Activated CD4-positive, alpha-beta T cell treated with anti-CD3 and anti-CD28 coated beads for 36 hours (primary cell): ENCODE measurements at regions of chr1 and their contacts with region 1.

Region 1: GRCh38 chr1:66331657-66332547 is 202.1 kb upstream of the SGIP1 start:
- DNase-seq: peak; percentile 75
- ATAC-seq: peak; percentile 40
- H3K4me3 Mint-ChIP-seq: peak overlapping the region; percentile 91
- H3K27ac Mint-ChIP-seq: peak overlapping the region; percentile 98
- H3K4me1 Mint-ChIP-seq: peaks cover 44% of the 10 kb centered on the region
- H3K27me3 Mint-ChIP-seq: no peaks in the 10 kb centered on the region

Region 2: GRCh38 chr1:66231217-66231616 is 100.7 kb before region 1 on chr1:
- CTCF ChIA-PET with region 1: no interaction called
- POLR2A ChIA-PET with region 1: no interaction called
- intact Hi-C with region 1: no loop called
- DNase-seq: no peak
- ATAC-seq: peak; percentile 97
- H3K4me3 Mint-ChIP-seq: no peak overlapping the region
- H3K27ac Mint-ChIP-seq: no peak overlapping the region
- H3K4me1 Mint-ChIP-seq: peaks cover 15% of the 10 kb centered on the region
- H3K27me3 Mint-ChIP-seq: peaks cover 6% of the 10 kb centered on the region

Region 3: DNA sequence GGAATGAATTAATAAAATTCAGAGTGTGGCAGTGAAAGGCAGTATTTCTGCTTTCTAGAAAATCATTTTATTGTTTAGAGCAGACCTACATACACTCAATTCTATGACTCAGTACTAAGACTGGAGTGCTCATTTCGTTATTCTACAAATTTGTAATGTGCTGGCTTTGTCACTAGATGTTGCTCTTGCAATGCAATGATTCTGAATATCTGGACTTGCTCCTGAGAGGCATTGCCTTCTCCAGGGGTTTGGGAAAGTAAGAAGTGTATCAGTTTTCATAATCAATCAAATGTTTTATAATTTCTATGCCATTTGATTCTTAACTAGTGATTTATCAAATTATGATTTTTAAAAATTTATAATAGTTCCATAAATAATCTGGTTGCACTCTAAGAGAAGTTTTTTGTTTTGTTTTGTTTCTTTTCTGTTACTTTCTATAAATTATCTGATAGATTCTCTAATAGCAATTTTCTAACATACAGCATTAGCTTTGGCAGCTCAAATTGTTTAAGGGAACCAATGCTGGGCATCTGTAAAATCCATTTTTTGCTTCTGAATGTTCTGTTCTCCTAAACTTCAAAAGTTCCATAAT is 78.5 kb before region 1 on chr1:
- CTCF ChIA-PET with region 1: interaction called, 5 read pairs
- POLR2A ChIA-PET with region 1: interaction called, 6 read pairs
- intact Hi-C with region 1: loop called (anchors 1 kb)
- DNase-seq: no peak
- ATAC-seq: peak; percentile 81
- H3K4me3 Mint-ChIP-seq: no peak overlapping the region
- H3K27ac Mint-ChIP-seq: no peak overlapping the region
- H3K4me1 Mint-ChIP-seq: peaks cover 49% of the 10 kb centered on the region
- H3K27me3 Mint-ChIP-seq: no peaks in the 10 kb centered on the region

Region 4: GRCh38 chr1:66258404-66259105 is 73.3 kb before region 1 on chr1:
- CTCF ChIA-PET with region 1: interaction called, 5 read pairs
- POLR2A ChIA-PET with region 1: interaction called, 6 read pairs
- intact Hi-C with region 1: loop called (anchors 1 kb)
- DNase-seq: no peak
- ATAC-seq: peak; percentile 91
- H3K4me3 Mint-ChIP-seq: no peak overlapping the region
- H3K27ac Mint-ChIP-seq: peak overlapping the region; percentile 68
- H3K4me1 Mint-ChIP-seq: peaks cover 90% of the 10 kb centered on the region
- H3K27me3 Mint-ChIP-seq: no peaks in the 10 kb centered on the region

Region 5: DNA sequence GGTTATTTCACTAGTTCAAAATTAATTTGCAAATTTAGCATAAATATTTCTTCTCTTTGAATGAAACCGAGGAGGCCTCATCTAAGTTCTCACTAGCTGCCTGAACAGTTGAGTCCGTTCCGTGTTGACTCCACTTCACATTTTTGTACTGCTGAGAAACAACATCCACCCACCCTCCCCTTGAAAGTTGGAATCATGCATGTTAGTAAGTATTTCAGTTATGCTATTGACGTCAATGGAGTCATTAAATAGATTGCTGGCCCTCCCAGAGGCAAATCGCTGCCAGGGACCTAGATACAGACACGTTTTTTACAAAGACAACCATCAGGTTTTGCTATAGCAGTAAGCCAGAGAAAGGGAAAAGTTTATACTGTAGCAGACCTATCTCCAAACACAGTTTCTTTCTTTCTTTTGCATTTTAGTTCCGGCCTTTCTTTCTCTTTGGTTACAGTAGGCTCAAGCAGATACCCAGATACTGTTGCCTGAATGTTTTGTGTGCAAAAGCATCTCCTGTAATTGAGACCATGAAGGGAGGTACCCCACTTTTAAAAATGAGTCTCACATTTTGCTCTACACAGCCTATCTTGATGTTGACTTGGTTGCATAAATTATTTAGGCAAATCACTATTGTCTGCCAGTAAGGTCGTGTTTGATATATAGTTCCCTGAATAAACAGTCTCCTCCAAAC is 60.5 kb before region 1 on chr1:
- CTCF ChIA-PET with region 1: interaction called, 3 read pairs
- POLR2A ChIA-PET with region 1: interaction called, 6 read pairs
- intact Hi-C with region 1: loop called in 1 of 2 experiments (anchors 1 kb)
- DNase-seq: peak; percentile 78
- ATAC-seq: peak; percentile 65
- H3K4me3 Mint-ChIP-seq: peak overlapping the region; percentile 47
- H3K27ac Mint-ChIP-seq: peak overlapping the region; percentile 90
- H3K4me1 Mint-ChIP-seq: peaks cover 76% of the 10 kb centered on the region
- H3K27me3 Mint-ChIP-seq: no peaks in the 10 kb centered on the region

Region 6: GRCh38 chr1:66300972-66301451 is 30.9 kb before region 1 on chr1:
- CTCF ChIA-PET with region 1: interaction called, 5 read pairs
- POLR2A ChIA-PET with region 1: no interaction called
- intact Hi-C with region 1: loop called (anchors 1 kb)
- DNase-seq: peak; percentile 43
- ATAC-seq: peak; percentile 96
- H3K4me3 Mint-ChIP-seq: peak overlapping the region; percentile 26
- H3K27ac Mint-ChIP-seq: peak overlapping the region; percentile 60
- H3K4me1 Mint-ChIP-seq: peaks cover 48% of the 10 kb centered on the region
- H3K27me3 Mint-ChIP-seq: no peaks in the 10 kb centered on the region

Region 7: DNA sequence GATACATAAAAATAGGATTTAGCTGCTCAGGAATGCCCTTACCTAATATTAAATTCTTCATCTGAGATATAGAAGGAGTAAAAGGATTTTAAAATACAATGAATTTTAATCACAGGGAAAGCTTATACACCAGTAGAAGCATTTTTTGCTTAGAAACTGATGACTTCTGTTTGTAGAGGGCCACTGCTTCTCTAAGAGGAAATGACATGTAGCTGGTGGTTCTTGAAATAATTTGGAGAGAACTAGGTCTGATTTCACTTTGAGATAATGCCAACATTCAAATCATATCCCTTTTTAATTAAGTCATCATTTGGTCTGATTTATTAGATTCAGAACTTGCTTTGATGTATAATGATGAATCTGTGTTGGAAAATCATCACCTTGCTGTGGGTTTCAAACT is 35.5 kb after region 1 on chr1:
- CTCF ChIA-PET with region 1: interaction called, 10 read pairs
- POLR2A ChIA-PET with region 1: interaction called, 5 read pairs
- intact Hi-C with region 1: loop called in 1 of 2 experiments (anchors 1 kb)
- DNase-seq: no peak
- ATAC-seq: no peak
- H3K4me3 Mint-ChIP-seq: peak overlapping the region; percentile 6
- H3K27ac Mint-ChIP-seq: peak overlapping the region; percentile 75
- H3K4me1 Mint-ChIP-seq: peaks cover 84% of the 10 kb centered on the region
- H3K27me3 Mint-ChIP-seq: no peaks in the 10 kb centered on the region

Region 8: GRCh38 chr1:66464802-66465201 is 132.9 kb after region 1 on chr1:
- CTCF ChIA-PET with region 1: no interaction called
- POLR2A ChIA-PET with region 1: no interaction called
- intact Hi-C with region 1: no loop called
- DNase-seq: no peak
- ATAC-seq: peak; percentile 53
- H3K4me3 Mint-ChIP-seq: no peak overlapping the region
- H3K27ac Mint-ChIP-seq: no peak overlapping the region
- H3K4me1 Mint-ChIP-seq: no peaks in the 10 kb centered on the region
- H3K27me3 Mint-ChIP-seq: no peaks in the 10 kb centered on the region